Caco-2 (cell line): ENCODE measurements at regions of chr1 and their contacts with region 1.

Region 1: GRCh38 chr1:150235852-150236613 is at the start of gene ANP32E:
- DNase-seq: peak; percentile 95 to 97
- H3K4me3 ChIP-seq: peak within 1 kb of the TSS; percentile 48
- H3K4me3 Mint-ChIP-seq: no peak within 1 kb of the TSS
- H3K27ac Mint-ChIP-seq: no peak within 1 kb of the TSS
- H3K4me1 ChIP-seq: peaks cover 13% of the 10 kb centered on the region
- H3K4me1 Mint-ChIP-seq: peaks cover 25% of the 10 kb centered on the region
- H3K27me3 ChIP-seq: no peaks in the 10 kb centered on the region
- H3K27me3 Mint-ChIP-seq: no peaks in the 10 kb centered on the region
- CTCF ChIP-seq: peak in 1 of 2 experiments; percentile 9
- total RNA-seq, gene ANP32E: 26.8 and 30.6 TPM in 2 replicates

Region 2: DNA sequence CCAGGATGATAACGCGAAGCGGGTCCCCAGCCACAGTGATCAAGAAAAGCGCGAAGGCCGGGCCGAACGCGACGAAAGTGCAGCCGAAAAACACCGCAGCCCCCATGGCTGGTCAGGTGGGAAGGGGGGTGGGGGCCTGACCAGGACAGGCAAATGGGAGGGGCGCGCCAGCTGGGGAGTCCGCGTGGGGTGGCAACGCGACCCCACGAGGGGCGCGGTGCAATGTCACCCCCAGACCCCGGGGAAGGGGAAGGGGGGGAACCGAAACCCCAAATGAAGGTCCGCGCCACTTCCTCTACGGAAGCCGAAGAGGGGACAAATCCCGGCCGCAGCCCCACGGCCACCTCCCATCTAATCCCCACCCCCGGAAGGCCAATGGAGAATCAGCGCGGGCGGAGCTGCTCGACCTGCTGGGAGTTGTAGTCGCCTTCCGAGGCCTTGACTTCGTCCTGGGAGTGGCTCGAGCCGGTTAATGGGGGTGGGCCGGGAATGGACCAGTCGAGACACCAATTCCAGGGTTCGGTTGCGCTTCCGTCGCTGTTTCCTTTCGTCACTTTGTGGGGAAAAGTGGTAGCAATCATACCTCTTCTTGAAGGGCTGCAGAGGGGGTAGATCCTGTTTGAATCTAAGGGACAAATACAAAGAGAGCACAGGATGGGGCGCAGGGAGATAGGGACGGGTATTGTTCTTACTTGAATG is 32.8 kb after region 1 on chr1 and contains the start of gene APH1A:
- CTCF ChIA-PET with region 1: no interaction called
- POLR2A ChIA-PET with region 1: no interaction called
- intact Hi-C with region 1: loop called (anchors 1 kb)
- DNase-seq: peak; percentile 95 to 97
- H3K4me3 ChIP-seq: peak within 1 kb of the TSS; percentile 68
- H3K4me3 Mint-ChIP-seq: peak within 1 kb of the TSS; percentile 87
- H3K27ac Mint-ChIP-seq: peak within 1 kb of the TSS; percentile 60
- H3K4me1 ChIP-seq: no peaks in the 10 kb centered on the region
- H3K4me1 Mint-ChIP-seq: peaks cover 14% of the 10 kb centered on the region
- H3K27me3 ChIP-seq: no peaks in the 10 kb centered on the region
- H3K27me3 Mint-ChIP-seq: no peaks in the 10 kb centered on the region
- CTCF ChIP-seq: no peak
- total RNA-seq, gene APH1A: 93.8 and 96.7 TPM in 2 replicates

Region 3: DNA sequence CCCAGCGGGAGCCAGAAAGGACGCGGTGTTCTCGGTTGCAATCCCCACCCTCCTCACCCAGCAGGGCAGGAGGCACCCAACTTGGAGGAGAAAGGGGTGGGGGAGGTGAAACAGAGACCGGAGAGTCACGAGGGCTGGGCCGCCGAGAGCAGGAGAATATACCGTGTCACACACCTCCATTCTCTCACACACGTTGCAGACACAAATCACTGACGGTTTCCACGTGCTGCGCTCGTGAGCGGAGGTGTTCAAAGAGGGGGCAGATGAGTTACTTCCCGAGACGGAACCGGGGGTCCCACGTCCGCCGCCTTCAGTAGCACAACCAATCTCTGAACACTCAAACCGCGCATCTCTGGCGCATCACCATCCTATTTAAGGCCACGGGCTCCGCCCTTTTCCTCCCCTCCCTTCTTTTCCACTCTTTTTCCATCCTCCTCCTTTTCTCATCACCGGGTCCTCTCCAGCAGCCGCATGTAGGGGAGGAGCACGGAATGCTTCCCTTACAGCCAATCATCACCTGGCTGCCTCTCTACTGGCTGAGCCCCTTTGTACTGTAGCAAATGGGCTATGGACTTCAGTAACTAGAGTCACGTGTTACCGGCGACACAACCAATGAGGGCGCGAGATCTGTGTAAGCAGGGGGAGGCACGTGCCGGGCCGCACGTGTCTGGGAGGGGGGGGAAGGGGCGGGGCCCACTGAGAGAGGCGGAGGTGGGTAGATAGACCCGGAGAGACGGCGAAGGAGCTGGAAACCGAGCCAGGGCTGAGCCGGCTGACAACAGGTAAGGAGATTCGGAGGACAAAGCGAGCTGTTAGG is 46.0 kb after region 1 on chr1 and contains the start of gene CIART:
- CTCF ChIA-PET with region 1: no interaction called
- POLR2A ChIA-PET with region 1: no interaction called
- intact Hi-C with region 1: loop called (anchors 1 kb)
- DNase-seq: peak; percentile 91 to 97
- H3K4me3 ChIP-seq: peak within 1 kb of the TSS; percentile 63
- H3K4me3 Mint-ChIP-seq: peak within 1 kb of the TSS; percentile 84
- H3K27ac Mint-ChIP-seq: peak within 1 kb of the TSS; percentile 67
- H3K4me1 ChIP-seq: peaks cover 4% of the 10 kb centered on the region; the same call in 1 of the 2 replicates
- H3K4me1 Mint-ChIP-seq: peaks cover 16% of the 10 kb centered on the region
- H3K27me3 ChIP-seq: no peaks in the 10 kb centered on the region
- H3K27me3 Mint-ChIP-seq: peaks cover 5% of the 10 kb centered on the region
- CTCF ChIP-seq: no peak
- total RNA-seq, gene CIART: 2.6 and 3.2 TPM in 2 replicates

Region 4: GRCh38 chr1:150352866-150353265 is 116.8 kb after region 1 on chr1:
- CTCF ChIA-PET with region 1: interaction called, 5 read pairs
- POLR2A ChIA-PET with region 1: interaction called, 13 read pairs
- intact Hi-C with region 1: no loop called
- DNase-seq: no peak
- H3K4me3 ChIP-seq: no peak overlapping the region
- H3K4me3 Mint-ChIP-seq: no peak overlapping the region
- H3K27ac Mint-ChIP-seq: no peak overlapping the region
- H3K4me1 ChIP-seq: no peaks in the 10 kb centered on the region
- H3K4me1 Mint-ChIP-seq: no peaks in the 10 kb centered on the region
- H3K27me3 ChIP-seq: no peaks in the 10 kb centered on the region
- H3K27me3 Mint-ChIP-seq: no peaks in the 10 kb centered on the region
- CTCF ChIP-seq: no peak